ENCODE measurements at regions of chr10 and their contacts with region 1.

Region 1: GRCh38 chr10:11045995-11046775 is 28.5 kb downstream of the CELF2 start:
- DNase-seq: peak; percentile 70 to 82
- ATAC-seq: peak; percentile 32 to 82 (median 72)
- H3K4me3 ChIP-seq: peak overlapping the region in 7 of 10 donors; percentile 1 to 28 (median 16)
- H3K27ac ChIP-seq: peak overlapping the region; percentile 61 to 86 (median 71)
- H3K4me1 ChIP-seq: peaks cover 25 to 89% (median 75%) of the 10 kb centered on the region in 9 donors
- H3K27me3 ChIP-seq: no peaks in the 10 kb centered on the region
- CTCF ChIP-seq: no peak

Region 2: GRCh38 chr10:11004144-11005077 is 41.8 kb before region 1 on chr10:
- intact Hi-C with region 1: no loop called
- DNase-seq: no peak
- ATAC-seq: no peak
- H3K4me3 ChIP-seq: no peak overlapping the region
- H3K27ac ChIP-seq: no peak overlapping the region
- H3K4me1 ChIP-seq: no peaks in the 10 kb centered on the region
- H3K27me3 ChIP-seq: peaks cover 0 to 8% (median 0%) of the 10 kb centered on the region in 7 donors
- CTCF ChIP-seq: no peak

Region 3: DNA sequence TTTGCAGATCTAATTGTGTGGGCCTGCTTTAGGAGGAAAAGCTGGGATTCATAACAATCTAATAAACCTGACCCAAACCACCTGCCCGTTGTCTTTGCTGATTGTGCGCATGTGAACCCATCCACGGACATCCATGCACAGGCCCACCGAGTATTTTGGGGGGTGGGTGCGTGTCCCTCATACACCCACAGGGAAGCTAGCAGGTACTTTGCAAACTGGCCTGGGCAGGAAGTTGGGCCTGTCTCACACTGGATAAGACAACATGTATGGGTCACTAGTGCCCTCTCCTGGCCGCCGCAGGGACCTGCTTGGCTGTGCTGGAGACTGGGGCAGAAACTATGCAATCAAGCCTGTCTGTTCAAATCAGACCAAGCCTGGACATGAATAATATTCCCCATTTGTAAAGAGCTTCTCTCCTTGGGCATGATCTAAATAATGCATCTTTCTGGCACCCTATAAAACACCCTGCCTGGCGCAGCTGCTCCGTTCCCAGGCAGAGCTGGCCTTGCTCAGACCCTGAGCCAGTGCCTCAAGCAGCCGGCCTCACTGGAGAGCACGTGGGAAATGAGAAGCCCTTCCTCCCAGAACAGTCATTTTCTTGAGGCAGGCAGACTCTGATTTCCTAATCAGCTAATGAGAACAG is 711.8 kb after region 1 on chr10:
- intact Hi-C with region 1: loop called in 1 of 10 experiments (anchors 5 kb)
- DNase-seq: peak; percentile 86 to 88
- ATAC-seq: peak; percentile 83 to 93 (median 89)
- H3K4me3 ChIP-seq: no peak overlapping the region
- H3K27ac ChIP-seq: peak overlapping the region; percentile 44 to 81 (median 68)
- H3K4me1 ChIP-seq: peaks cover 7 to 60% (median 33%) of the 10 kb centered on the region in 9 donors
- H3K27me3 ChIP-seq: no peaks in the 10 kb centered on the region
- CTCF ChIP-seq: peak; percentile 72 to 93 (median 92)

Measured in heart right ventricle (tissue), 16 donors.